Heart right ventricle (tissue), 16 donors: ENCODE measurements at regions of chr12 and their contacts with region 1.

Region 1: GRCh38 chr12:29725587-29726320 is 58.0 kb downstream of the TMTC1 start:
- DNase-seq: peak; percentile 68 to 81
- ATAC-seq: peak; percentile 81 to 98 (median 94)
- H3K4me3 ChIP-seq: peak overlapping the region in 3 of 10 donors; percentile 1 to 19 (median 3)
- H3K27ac ChIP-seq: peak overlapping the region; percentile 54 to 85 (median 80)
- H3K4me1 ChIP-seq: peaks cover 6 to 55% (median 48%) of the 10 kb centered on the region in 9 donors
- H3K27me3 ChIP-seq: no peaks in the 10 kb centered on the region
- CTCF ChIP-seq: no peak

Region 2: GRCh38 chr12:29398495-29398894 is 327.3 kb before region 1 on chr12:
- intact Hi-C with region 1: no loop called
- DNase-seq: no peak
- ATAC-seq: no peak
- H3K4me3 ChIP-seq: no peak overlapping the region
- H3K27ac ChIP-seq: no peak overlapping the region
- H3K4me1 ChIP-seq: no peaks in the 10 kb centered on the region
- H3K27me3 ChIP-seq: peaks cover 0 to 4% (median 0%) of the 10 kb centered on the region in 7 donors
- CTCF ChIP-seq: no peak

Region 3: GRCh38 chr12:29562167-29562776 is 163.5 kb before region 1 on chr12:
- intact Hi-C with region 1: loop called in 3 of 10 experiments (anchors 5 to 10 kb)
- DNase-seq: peak in 1 of 2 donors; percentile 75
- ATAC-seq: peak; percentile 80 to 97 (median 94)
- H3K4me3 ChIP-seq: no peak overlapping the region
- H3K27ac ChIP-seq: peak overlapping the region; percentile 16 to 89 (median 76)
- H3K4me1 ChIP-seq: peaks cover 0 to 77% (median 54%) of the 10 kb centered on the region in 9 donors
- H3K27me3 ChIP-seq: no peaks in the 10 kb centered on the region
- CTCF ChIP-seq: no peak

Region 4: GRCh38 chr12:29818916-29819623 is 93.3 kb after region 1 on chr12:
- intact Hi-C with region 1: no loop called
- DNase-seq: peak; percentile 25 to 55
- ATAC-seq: peak; percentile 71 to 91 (median 82)
- H3K4me3 ChIP-seq: no peak overlapping the region
- H3K27ac ChIP-seq: no peak overlapping the region
- H3K4me1 ChIP-seq: peaks cover 0 to 23% (median 6%) of the 10 kb centered on the region in 9 donors
- H3K27me3 ChIP-seq: no peaks in the 10 kb centered on the region
- CTCF ChIP-seq: no peak